Panc1 (cell line): ENCODE measurements at regions of chr1 and their contacts with region 1.

Region 1: DNA sequence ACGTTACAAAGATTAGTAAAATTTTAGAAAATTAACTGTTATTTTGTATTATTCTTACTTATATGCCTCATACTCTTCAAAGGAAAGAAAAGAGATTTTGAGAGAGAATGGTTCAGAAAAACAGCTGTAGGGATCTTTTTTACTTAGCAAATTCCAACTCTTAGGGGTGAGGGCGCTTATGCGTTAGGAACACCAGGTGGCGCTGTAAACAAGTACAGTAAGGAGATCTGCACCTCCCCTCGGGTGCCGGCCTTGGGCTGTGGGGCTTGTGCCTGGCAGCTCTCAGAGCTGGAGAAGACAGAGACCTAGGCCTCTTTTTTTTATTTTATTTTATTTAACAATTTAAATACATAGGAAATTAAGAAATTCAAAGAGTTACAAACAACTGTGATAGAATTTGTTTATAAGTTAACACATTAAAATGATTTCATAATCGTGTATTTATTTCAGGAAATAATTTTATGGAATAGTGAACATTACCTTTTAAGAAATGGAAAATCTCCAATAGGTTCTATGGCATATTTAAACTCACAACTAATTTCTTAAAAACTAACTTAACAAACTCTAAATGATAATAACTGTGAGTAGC is 32.6 kb downstream of the UTP25 start:
- DNase-seq: no peak
- ATAC-seq: peak; percentile 96
- H3K4me3 ChIP-seq: no peak overlapping the region
- H3K27ac ChIP-seq: no peak overlapping the region
- H3K4me1 ChIP-seq: no peaks in the 10 kb centered on the region
- H3K27me3 ChIP-seq: peaks cover 3% of the 10 kb centered on the region; the same call in 1 of the 2 replicates
- CTCF ChIP-seq: peak; percentile 90

Region 2: DNA sequence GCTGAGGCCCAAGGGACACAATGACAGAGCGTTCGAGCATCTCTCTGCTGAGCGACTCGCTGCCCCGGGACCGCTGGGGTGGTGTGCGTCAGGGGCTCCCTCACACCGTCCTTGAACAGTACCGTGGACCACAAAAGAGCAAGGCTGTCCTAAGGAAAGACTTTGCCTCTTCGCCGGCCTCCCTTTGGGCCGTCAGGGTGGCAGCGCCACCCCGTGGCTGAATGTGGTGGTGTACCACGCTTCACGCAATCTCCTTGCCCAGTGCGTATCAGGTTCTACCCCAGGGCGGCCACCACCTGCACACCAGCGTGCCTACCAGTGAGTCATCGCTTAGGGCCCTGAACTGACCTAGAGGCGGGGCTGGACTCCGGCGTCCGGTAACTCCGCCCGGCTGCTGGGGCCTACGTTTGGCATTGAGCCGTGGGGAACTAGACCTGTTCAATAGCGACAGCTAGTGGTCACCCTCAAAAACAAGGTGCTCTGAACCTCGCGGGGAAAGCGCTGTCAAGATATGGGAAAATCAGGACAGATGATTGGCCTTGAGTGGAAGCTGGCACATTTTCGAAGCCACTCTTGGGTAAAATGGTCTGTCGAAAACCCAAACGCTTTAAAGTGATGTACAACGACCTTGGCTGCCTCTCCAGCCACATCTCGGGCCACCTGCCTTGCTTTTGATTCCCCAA is 112.7 kb before region 1 on chr1:
- CTCF ChIA-PET with region 1: no interaction called
- POLR2A ChIA-PET with region 1: no interaction called
- in situ Hi-C with region 1: no loop called
- intact Hi-C with region 1: no loop called
- DNase-seq: peak; percentile 82
- ATAC-seq: peak; percentile 96
- H3K4me3 ChIP-seq: peak overlapping the region; percentile 21 to 49
- H3K27ac ChIP-seq: no peak overlapping the region
- H3K4me1 ChIP-seq: no peaks in the 10 kb centered on the region
- H3K27me3 ChIP-seq: peaks cover 4% of the 10 kb centered on the region; the same call in 1 of the 2 replicates
- CTCF ChIP-seq: peak; percentile 95

Region 3: DNA sequence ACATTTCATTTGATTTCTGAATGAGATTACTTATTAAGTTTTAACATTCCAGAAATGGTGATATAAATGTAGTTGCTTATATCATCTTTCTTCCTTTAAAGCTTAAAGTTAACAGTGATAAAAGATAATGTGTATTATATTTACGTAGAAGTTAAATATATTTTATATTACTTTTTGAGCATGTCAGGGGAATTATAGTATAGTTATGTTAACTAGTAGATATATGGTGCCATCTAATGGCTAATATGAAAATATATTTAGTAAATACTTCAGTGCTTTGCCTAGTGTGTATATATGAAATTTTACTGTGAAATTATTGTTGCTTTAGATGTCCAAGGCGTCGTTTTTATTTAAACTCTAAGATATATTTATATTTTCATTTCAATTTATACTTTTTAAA is 129.1 kb after region 1 on chr1:
- CTCF ChIA-PET with region 1: interaction called, 15 read pairs
- POLR2A ChIA-PET with region 1: no interaction called
- in situ Hi-C with region 1: no loop called
- intact Hi-C with region 1: loop called (anchors 1 kb)
- DNase-seq: no peak
- ATAC-seq: 0 out of 2 replicates have a peak, but pooled peaks have one; percentile 71
- H3K4me3 ChIP-seq: no peak overlapping the region
- H3K27ac ChIP-seq: no peak overlapping the region
- H3K4me1 ChIP-seq: no peaks in the 10 kb centered on the region
- H3K27me3 ChIP-seq: peaks cover 2% of the 10 kb centered on the region; the same call in 1 of the 2 replicates
- CTCF ChIP-seq: no peak

Region 4: GRCh38 chr1:210311726-210312493 is 451.5 kb after region 1 on chr1:
- CTCF ChIA-PET with region 1: no interaction called
- POLR2A ChIA-PET with region 1: no interaction called
- in situ Hi-C with region 1: no loop called
- intact Hi-C with region 1: loop called (anchors 2 kb)
- DNase-seq: no peak
- ATAC-seq: peak; percentile 40; the same call in 1 of the 2 replicates
- H3K4me3 ChIP-seq: peak overlapping the region; percentile 41 to 48
- H3K27ac ChIP-seq: no peak overlapping the region
- H3K4me1 ChIP-seq: no peaks in the 10 kb centered on the region
- H3K27me3 ChIP-seq: peaks cover 9% of the 10 kb centered on the region; the same call in 1 of the 2 replicates
- CTCF ChIP-seq: no peak